ENCODE measurements at regions of chr4 and their contacts with region 1.

Region 1: DNA sequence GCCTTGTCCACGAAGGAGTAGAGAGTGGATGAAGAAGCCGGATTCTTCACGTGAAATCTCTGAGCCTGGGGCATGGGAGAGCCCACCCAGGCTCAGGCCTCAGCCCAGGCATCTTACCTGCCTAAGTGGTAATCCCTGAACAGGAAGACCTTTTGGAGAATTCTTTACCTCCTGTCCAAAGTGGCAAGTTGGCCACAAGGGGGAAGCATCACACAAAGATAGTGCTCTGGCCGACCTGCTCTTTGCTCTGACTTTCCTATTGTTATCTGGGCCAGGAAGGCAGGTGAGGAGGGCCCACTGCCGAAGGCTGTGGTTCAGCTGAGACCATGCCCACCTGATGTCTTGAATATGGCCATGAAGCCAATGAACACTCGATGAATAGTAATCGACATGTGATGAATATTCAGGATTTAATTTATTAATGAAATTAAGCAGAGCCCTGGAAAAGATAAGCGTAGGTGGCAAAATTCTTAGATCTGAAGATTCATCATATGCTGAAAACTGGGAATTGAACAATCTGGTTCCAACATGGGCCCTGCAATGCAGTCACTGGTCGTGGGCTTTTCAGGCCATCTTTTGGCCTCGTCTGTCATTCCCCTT is 93.8 kb downstream of the PDGFRA start:
- DNase-seq: peak; percentile 86
- H3K4me3 Mint-ChIP-seq: no peak overlapping the region
- H3K27ac Mint-ChIP-seq: no peak overlapping the region
- H3K4me1 Mint-ChIP-seq: peaks cover 11% of the 10 kb centered on the region
- H3K27me3 Mint-ChIP-seq: no peaks in the 10 kb centered on the region

Region 2: GRCh38 chr4:53855581-53856250 is 467.2 kb before region 1 on chr4:
- intact Hi-C with region 1: no loop called
- DNase-seq: no peak
- H3K4me3 Mint-ChIP-seq: no peak overlapping the region
- H3K27ac Mint-ChIP-seq: no peak overlapping the region
- H3K4me1 Mint-ChIP-seq: no peaks in the 10 kb centered on the region
- H3K27me3 Mint-ChIP-seq: peaks cover 5% of the 10 kb centered on the region

Region 3: DNA sequence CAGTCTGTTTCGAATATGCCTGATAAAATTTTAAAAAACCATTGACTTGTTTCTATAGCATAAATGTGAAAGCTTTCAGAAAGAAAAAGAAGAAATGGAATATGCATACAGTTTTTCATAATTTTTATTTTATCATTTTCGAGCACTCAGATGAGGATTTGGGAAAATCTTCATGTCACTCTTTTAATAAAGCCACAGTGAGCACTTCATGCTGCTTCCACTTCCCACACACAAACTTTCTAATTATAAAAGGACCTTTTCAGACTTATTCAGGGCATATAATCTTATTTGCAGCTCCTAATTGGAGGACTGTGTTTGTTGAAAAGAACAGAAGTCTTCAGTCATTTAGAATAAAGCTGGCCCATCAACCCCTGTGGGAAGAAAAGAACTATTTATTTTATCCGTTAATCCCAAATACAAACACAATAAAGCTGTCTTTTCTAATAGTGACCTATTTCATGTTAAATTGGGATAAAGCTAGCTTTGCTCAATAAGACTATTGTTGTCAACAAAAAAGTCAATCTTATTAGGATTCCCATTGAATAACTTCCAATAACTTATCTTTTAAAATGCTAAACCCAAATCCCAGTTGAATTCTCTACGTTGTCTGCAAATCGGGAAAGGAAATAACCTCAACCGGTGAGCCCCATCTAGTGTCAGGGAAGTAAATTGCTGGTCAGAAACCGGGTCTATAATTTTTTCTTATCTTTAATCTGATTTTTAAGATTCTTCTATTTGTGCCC is 117.6 kb after region 1 on chr4:
- intact Hi-C with region 1: loop called (anchors 2 kb)
- DNase-seq: no peak
- H3K4me3 Mint-ChIP-seq: no peak overlapping the region
- H3K27ac Mint-ChIP-seq: no peak overlapping the region
- H3K4me1 Mint-ChIP-seq: no peaks in the 10 kb centered on the region
- H3K27me3 Mint-ChIP-seq: peaks cover 14% of the 10 kb centered on the region

Region 4: DNA sequence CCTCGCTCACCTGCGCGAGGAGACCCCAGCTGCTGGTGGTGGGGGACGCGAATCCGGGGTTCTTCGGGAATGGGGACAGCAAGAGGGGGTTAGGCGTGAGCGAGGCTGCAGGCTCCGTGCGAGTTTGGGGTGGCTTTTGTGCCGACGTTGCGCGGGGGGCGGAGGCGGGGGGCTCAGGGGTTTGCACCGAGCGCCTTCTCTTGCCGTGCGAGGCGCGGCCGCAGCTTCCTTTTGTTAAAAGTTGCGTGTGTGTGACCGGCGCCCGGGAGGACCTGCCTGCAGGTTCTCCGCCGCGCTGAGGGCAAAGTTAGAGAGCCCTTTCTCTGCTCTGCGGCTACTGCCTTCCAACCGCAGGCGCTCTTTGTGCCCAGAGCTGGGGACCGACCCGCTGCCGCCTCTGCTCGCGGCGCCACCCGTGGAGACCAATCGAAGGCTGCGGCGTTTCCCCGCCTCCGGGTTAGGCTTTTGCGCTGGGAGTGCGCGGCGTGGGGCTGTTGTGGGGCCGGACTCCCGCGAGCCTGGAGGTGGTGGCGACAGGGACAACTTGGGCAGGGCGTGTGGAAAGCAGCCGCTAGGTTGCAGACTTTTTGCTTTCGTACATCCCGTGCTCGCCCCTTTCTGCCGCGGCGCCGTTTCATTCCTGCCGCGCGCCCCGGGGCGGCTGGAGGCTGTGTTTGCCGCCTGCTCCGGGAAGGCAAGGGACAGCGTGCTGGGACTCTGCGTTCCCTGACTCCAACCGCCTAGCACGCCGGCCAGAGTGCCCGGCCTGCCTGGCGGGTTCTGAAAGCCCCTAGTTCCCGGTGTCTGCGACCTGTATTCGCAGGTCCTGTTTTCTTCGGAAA is 335.6 kb after region 1 on chr4:
- intact Hi-C with region 1: loop called (anchors 5 kb)
- DNase-seq: peak; percentile 73
- H3K4me3 Mint-ChIP-seq: peak overlapping the region; percentile 81
- H3K27ac Mint-ChIP-seq: no peak overlapping the region
- H3K4me1 Mint-ChIP-seq: peaks cover 13% of the 10 kb centered on the region
- H3K27me3 Mint-ChIP-seq: peaks cover 66% of the 10 kb centered on the region

Region 5: GRCh38 chr4:54840992-54841768 is 518.3 kb after region 1 on chr4:
- intact Hi-C with region 1: loop called (anchors 5 kb)
- DNase-seq: no peak
- H3K4me3 Mint-ChIP-seq: no peak overlapping the region
- H3K27ac Mint-ChIP-seq: no peak overlapping the region
- H3K4me1 Mint-ChIP-seq: no peaks in the 10 kb centered on the region
- H3K27me3 Mint-ChIP-seq: no peaks in the 10 kb centered on the region

Measured in activated CD4-positive, alpha-beta T cell treated with anti-CD3 and anti-CD28 coated beads, Interleukin-2, amount 10 ng/mL, durations not matched to agents 24 days and 14 days (primary cell).